HEK293T (cell line): ENCODE measurements at regions of chr3 and their contacts with region 1.

Region 1: DNA sequence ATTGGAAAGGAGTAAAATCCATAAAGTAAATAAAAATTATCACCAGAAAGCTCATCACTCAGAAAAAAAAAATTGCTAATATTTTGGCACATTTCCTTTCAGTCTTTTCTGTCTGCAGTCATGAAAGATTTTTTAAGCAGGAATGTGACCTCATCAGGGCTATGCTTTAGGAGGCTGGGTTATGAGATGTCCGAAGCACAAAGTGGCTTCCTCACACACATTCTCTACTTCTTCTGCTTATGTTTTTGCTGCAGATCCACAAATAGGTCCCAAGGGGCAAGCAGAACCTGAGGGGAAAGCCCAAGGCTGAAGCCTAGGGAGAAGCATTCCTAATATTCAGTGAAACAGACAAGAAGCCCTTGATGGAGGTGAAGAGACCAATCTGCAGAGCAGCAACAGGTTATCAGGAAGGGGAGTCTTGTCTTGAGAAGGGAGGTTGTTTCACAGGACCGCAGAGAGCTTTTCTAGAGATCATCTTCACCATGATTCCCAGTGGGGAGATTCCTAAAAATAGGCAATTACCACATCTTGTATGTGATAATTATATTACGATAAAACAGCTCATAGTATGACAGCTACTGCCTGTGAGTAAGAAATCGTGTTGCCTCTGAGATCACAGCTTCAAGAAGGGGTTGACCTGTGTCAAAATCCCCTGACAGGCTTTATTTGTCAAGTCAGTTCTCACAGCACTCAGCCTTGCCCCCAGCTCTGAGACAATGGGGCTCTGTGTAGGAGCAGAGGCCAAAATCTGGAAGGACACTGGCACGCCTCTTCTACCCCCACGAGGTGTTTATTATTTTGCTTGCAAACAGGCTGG is 60.5 kb downstream of the IGF2BP2 start:
- DNase-seq: no peak

Region 2: DNA sequence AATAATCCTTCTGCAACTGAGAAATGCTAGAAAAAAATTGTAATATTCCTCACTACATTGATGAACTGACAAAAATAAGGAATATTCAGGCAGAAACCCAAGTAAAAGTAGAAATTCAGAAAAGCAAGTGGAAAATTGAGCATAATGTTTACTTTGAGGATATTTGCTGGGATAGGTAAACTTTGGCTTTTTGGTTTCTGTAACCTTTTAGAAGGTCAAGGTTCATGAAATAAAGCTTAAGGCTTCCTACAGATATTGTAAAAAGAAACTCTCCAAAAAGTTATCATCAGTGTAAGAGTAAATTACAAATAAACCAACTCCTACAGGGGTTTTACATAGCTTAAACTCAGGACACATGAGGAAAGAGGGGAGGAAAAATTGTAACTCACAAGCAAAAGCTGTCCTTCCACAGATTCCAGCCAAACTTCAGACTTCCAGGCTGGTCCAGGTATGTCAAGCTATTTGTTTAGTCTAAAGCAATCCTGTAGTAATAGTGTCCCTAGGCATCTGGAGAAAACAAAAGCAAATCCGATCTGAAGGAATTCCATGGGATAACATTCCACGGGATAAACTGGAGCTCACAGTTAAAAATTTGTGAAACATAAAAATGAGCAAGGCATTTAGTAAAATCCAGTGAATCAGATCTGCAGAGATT is 632.6 kb before region 1 on chr3:
- CTCF ChIA-PET with region 1: no interaction called
- POLR2A ChIA-PET with region 1: no interaction called
- DNase-seq: no peak

Region 3: DNA sequence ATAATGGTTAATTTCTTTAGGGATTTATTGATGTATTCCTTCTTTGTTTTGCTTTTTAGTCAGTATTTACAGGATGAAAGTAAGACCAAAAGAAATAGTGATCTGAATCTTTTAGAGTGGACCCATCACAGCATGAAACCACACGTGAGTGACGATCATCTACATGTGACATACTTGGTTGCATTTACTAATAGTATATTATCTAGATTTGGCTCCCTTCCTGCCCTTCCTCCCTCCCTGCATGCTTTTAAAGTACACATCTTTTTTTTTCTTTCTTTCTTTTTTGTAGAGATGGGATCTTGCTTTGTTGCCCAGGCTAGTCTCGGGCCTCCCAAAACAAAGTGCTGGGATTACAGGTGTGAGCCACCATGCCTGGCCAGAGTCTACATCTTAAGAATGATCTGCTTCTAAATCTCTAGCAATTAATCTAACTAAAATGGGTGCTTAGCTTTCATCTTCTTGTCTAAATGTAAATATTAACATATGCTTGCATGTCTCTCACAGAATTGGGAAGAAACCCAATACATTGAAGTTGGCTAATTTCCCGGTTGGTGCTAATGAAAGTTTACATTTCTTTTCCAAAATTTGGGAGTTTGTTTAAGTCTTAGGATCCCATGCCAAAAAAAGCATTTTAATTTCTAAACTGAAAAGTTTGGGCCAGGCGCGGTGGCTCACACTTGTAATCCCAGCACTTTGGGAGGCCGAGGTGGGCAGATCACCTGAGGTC is 140.3 kb before region 1 on chr3:
- CTCF ChIA-PET with region 1: no interaction called
- POLR2A ChIA-PET with region 1: no interaction called
- DNase-seq: no peak

Region 4: GRCh38 chr3:185659942-185660921 is 104.1 kb before region 1 on chr3:
- CTCF ChIA-PET with region 1: interaction called, 14 read pairs
- POLR2A ChIA-PET with region 1: no interaction called
- DNase-seq: peak; percentile 76

Region 5: GRCh38 chr3:185733980-185734724 is 30.2 kb before region 1 on chr3:
- CTCF ChIA-PET with region 1: interaction called, 18 read pairs
- POLR2A ChIA-PET with region 1: interaction called, 3 read pairs
- DNase-seq: peak; percentile 61

Region 6: DNA sequence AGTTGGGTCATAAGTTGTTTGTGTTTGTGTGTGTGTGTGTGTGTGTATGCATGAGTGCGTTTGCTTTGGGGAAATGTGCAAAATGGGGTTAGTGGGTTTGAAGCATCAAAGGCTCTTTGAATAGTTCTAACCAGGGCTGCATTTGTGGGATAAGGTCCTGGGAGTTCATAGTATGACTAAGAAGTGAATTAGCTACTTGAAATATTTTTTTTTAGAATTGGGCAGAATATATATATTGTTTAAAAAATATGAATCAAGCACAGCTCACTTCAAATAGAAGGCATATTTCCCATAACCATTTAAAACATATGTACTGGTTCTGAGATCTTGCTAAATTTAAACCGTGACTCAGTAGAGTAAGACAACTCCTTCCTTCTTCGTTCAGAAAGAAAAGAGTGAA is 17.4 kb after region 1 on chr3:
- CTCF ChIA-PET with region 1: interaction called, 12 read pairs
- POLR2A ChIA-PET with region 1: interaction called, 3 read pairs
- DNase-seq: no peak

Region 7: DNA sequence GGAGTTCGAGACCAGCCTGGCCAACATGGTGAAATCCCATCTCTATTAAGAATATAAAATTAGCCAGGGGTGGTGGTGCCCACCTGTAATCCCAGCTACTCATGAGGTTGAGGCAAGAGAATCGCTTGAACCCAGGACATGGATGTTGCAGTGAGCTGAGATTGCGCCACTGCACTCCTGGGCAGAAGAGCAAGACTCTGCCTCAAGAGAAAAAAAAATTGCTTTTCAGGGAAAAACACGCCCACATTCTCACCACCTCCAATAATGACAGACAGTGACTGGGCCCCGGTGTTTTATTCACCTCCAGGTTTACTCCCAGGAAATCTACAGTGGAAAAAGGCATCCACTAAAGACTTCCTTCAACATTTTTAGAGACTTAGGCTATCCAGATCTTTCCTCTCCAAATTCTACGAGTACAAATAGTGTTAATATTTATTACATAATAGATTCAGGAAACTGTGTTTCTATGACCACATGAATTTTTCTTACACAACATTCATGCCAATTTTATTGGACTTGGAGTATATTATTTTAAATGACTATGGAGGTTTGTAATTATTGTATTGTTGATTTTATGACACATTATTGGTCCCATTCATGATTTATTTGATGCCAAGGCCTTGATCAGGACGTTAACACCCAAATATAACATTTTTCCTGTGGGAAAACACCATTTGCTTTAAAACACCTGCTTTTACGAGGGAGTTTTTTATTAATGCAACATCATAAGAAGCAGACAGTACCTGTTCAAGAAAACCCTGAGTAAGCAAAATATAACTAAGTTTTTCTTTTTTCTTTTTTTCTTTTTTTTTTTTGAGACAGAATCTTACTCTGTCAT is 33.8 kb after region 1 on chr3:
- CTCF ChIA-PET with region 1: no interaction called
- POLR2A ChIA-PET with region 1: no interaction called
- DNase-seq: no peak

Region 8: DNA sequence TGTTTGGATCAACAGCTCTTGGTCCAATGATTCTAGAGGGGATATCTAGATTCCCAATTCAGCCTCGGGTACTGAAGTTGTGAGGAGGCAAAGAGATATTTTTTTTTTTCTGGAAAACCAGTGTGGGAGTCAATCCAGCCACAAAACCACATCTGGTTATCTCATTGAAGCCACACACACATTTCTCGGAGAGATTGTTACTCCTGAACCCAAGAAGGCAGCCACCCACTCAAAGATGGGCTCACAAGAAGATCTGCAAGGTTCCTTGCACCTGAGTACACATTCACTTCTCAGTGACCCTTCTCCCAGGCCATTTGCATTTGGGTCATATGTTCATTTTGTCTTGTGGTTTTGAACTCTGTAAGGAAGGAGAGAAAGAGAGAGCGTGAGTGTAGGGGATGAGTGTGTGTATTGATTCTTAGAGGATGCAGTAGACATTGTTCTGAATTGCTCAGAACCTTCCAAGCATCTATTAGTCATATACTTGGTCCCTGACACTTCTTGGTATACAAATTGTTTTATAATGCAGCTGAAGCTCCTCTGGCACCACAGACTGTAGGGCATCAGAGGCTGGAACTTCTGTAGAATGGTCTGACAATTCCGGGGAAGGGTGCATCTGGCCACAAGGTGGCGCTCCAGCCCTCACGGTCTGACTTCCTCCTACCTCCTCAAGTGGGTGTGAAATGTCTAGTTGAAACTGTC is 212.8 kb after region 1 on chr3:
- CTCF ChIA-PET with region 1: no interaction called
- POLR2A ChIA-PET with region 1: no interaction called
- DNase-seq: peak; percentile 65